Endothelial cell of umbilical vein (primary cell): ENCODE measurements at regions of chr15 and their contacts with region 1.

Region 1: GRCh38 chr15:39358441-39359041 is 222.3 kb upstream of the THBS1 start:
- DNase-seq: peak; percentile 97
- H3K4me3 ChIP-seq: no peak overlapping the region
- H3K27ac ChIP-seq: peak overlapping the region; percentile 100
- H3K4me1 ChIP-seq: peaks cover 63% of the 10 kb centered on the region
- H3K27me3 ChIP-seq: no peaks in the 10 kb centered on the region
- CTCF ChIP-seq: no peak
- POLR2A ChIP-seq: peak; percentile 56

Region 2: GRCh38 chr15:38828031-38828532 is 530.5 kb before region 1 on chr15:
- CTCF ChIA-PET with region 1: no interaction called
- POLR2A ChIA-PET with region 1: no interaction called
- dilution Hi-C with region 1: no loop called
- intact Hi-C with region 1: loop called (anchors 1 kb)
- DNase-seq: peak; percentile 100
- H3K4me3 ChIP-seq: no peak overlapping the region
- H3K27ac ChIP-seq: peak overlapping the region; percentile 100
- H3K4me1 ChIP-seq: peaks cover 59% of the 10 kb centered on the region
- H3K27me3 ChIP-seq: no peaks in the 10 kb centered on the region
- CTCF ChIP-seq: no peak
- POLR2A ChIP-seq: peak; percentile 65

Region 3: DNA sequence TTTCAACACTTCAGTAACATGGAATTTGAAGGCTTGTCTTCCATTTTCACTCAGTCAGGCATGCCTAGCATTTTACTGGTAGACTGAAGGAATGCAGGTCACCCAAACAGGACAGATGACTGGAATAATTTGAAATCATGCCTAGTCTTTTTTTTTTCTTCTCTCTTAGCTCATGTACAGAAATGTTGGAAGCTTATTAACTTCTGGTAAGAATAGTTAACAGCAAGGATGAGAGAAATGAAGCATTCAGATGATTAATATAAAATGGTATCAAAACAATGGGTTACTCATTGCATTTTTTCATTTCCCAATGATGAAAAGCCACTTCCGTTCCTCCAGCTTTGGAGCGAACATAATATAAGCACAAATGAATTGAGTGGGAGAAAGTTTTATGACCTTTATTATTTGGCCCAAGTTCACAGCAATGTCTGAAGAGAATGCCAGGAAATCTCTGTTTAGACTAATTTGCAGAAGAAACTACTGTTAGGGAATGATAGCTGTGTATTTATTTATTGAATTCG is 362.4 kb before region 1 on chr15:
- CTCF ChIA-PET with region 1: no interaction called
- POLR2A ChIA-PET with region 1: no interaction called
- dilution Hi-C with region 1: no loop called
- intact Hi-C with region 1: loop called (anchors 1 kb)
- DNase-seq: peak; percentile 96
- H3K4me3 ChIP-seq: no peak overlapping the region
- H3K27ac ChIP-seq: peak overlapping the region; percentile 92
- H3K4me1 ChIP-seq: peaks cover 51% of the 10 kb centered on the region
- H3K27me3 ChIP-seq: no peaks in the 10 kb centered on the region
- CTCF ChIP-seq: no peak
- POLR2A ChIP-seq: peak; percentile 35

Region 4: DNA sequence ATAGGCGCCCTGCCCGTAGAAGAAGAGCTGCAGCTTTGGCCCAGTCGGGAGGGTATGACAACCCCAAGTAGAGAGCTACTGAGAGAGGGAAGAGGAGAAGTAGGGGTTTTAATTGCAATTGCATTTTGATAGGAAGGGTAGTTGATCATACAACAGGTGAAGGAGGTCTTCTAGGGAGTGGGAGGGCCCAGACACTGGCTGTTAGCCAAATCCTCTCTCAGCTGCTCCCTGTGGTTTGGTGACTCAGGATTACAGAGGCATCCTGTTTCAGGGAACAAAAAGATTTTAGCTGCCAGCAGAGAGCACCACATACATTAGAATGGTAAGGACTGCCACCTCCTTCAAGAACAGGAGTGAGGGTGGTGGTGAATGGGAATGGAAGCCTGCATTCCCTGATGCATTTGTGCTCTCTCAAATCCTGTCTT is 186.6 kb before region 1 on chr15:
- CTCF ChIA-PET with region 1: interaction called, 29 read pairs
- POLR2A ChIA-PET with region 1: interaction called, 11 read pairs
- dilution Hi-C with region 1: loop called (anchors 25 kb)
- intact Hi-C with region 1: loop called (anchors 1 kb)
- DNase-seq: peak; percentile 99
- H3K4me3 ChIP-seq: no peak overlapping the region
- H3K27ac ChIP-seq: peak overlapping the region; percentile 87
- H3K4me1 ChIP-seq: peaks cover 17% of the 10 kb centered on the region
- H3K27me3 ChIP-seq: no peaks in the 10 kb centered on the region
- CTCF ChIP-seq: peak; percentile 41 to 62
- POLR2A ChIP-seq: peak; percentile 30

Region 5: DNA sequence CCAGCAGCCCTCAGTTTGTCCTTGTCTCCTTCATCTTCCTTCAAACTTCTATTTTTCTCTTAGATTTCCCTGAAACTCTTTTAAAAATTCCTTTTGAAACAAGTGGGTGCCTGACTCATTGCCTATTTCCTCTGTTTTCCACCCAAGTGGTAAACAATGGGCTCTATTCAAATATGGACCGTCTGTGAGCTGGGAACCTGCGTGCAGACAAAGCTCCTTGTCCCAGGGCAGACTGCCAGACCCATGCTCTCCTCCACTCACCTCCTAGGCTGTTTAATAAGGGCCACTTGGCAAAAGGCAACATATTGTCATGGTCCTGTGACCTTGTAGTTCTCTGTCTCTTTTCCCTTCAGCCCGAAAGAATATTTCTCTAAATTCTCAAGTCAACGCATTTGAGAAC is 110.3 kb before region 1 on chr15:
- CTCF ChIA-PET with region 1: interaction called, 3 read pairs
- POLR2A ChIA-PET with region 1: interaction called, 4 read pairs
- dilution Hi-C with region 1: no loop called
- intact Hi-C with region 1: loop called (anchors 1 kb)
- DNase-seq: peak; percentile 99
- H3K4me3 ChIP-seq: peak overlapping the region in 1 of 3 experiments; percentile 0
- H3K27ac ChIP-seq: peak overlapping the region; percentile 98
- H3K4me1 ChIP-seq: peaks cover 72% of the 10 kb centered on the region
- H3K27me3 ChIP-seq: no peaks in the 10 kb centered on the region
- CTCF ChIP-seq: no peak
- POLR2A ChIP-seq: no peak

Region 6: DNA sequence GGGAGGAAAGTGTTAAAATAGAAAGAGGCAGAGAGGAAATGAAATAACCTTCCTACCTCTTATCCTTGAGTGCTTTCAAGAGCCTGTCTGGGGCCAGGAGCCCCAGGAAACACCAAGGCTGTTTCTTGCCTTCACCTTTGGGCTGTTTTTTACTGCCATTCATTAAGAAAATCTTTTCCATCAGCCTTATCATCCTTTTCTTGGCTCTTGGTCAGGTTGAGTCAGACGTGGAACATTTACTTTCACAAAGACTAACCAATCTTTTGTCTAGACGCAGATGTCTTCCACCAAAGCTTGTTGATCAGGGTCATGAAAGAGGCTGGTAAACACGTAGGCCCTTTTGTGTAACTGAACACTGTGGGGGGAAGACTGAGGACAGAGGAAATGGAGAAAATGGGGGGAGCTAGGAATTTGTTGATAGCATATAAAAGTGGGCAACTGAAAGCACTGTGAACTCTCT is 71.4 kb after region 1 on chr15:
- CTCF ChIA-PET with region 1: interaction called, 5 read pairs
- POLR2A ChIA-PET with region 1: interaction called, 15 read pairs
- dilution Hi-C with region 1: no loop called
- intact Hi-C with region 1: loop called (anchors 1 kb)
- DNase-seq: peak; percentile 99
- H3K4me3 ChIP-seq: no peak overlapping the region
- H3K27ac ChIP-seq: peak overlapping the region; percentile 98
- H3K4me1 ChIP-seq: peaks cover 52% of the 10 kb centered on the region
- H3K27me3 ChIP-seq: no peaks in the 10 kb centered on the region
- CTCF ChIP-seq: no peak
- POLR2A ChIP-seq: peak; percentile 75